HEK293T (cell line): ENCODE measurements at regions of chr1 and their contacts with region 1.

Region 1: GRCh38 chr1:3453203-3453761 is 1.2 kb upstream of the ARHGEF16 start:
- DNase-seq: peak; percentile 89

Region 2: GRCh38 chr1:3441410-3441847 is 11.9 kb before region 1 on chr1:
- CTCF ChIA-PET with region 1: interaction called, 13 read pairs
- POLR2A ChIA-PET with region 1: interaction called, 4 read pairs
- DNase-seq: no peak

Region 3: GRCh38 chr1:3471302-3472087 is 18.2 kb after region 1 on chr1:
- CTCF ChIA-PET with region 1: interaction called, 19 read pairs
- POLR2A ChIA-PET with region 1: interaction called, 3 read pairs
- DNase-seq: no peak

Region 4: DNA sequence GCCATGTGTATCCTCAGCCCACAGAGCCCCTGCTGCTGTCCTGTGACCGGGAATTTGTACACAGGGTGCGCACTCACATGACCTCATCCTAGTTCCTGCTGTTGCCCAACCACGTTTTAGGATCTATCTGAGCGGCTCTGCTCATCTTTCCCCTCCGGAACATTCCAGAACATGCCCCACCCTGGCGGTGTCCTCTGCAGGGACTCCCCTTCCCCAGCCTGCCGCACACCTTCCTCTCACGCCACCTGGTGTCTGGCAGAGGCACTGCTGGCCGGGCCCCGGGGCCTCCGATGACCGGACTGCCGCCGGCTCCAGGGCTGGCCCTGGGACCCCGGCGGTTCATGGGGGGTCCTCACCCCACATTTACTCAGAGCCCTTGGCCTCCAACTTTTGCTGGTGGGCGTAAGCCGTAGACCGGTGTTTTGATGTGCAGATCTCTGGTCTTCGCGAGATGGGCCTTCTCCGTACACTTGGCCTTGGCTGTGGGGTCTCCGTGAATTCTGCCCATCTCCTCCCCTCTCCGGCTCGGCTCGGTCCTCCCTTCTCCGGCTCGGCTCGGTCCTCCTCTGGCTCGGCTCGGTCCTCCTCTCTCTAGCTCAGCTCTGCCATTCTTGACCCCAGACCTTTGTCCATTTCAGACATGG is 30.6 kb after region 1 on chr1:
- CTCF ChIA-PET with region 1: interaction called, 26 read pairs
- POLR2A ChIA-PET with region 1: interaction called, 3 read pairs
- DNase-seq: peak; percentile 76

Region 5: DNA sequence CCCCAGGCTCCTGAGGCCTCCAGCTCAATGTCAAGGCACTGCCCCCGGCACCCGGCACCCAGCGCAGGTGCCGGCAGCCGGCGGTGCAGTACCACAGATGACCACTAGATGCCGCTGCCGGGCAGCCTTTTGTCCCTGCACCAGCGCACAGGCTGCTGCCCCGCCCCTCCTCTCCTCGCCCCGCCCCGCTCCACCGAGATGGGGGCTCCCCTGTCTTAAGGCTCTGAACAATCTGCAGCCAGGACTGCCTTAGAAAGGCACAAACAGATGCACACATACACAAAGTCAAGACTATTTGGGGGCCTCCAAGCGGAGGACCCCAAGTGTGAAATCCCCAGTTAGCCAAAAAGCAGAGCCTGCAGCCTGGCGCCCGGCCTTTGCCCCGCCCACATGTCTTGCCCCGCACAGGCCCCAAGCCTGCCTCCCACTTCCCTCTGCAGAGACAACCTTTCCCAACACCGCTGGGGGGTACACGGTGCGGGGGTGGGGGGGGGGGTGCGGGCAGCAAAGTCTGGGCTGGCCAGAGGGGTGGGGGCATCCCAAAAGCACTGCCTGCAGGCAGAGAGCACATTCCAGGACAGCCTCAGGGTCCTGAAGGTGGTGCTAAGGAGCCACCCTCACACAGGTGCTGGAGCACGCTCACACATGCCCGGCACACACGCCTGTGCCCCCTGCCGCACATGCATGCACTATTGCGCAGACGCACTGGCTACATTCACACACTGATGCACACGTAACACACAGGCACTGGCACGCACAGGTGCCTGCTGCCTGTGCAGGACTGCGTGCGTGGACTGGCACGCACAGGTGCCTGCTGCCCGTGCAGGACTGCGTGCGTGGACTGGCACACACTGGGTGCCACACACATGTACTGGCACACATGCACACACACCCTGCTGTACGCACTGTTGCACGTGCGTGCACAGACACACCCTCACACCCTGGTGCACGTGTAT is 38.3 kb after region 1 on chr1:
- CTCF ChIA-PET with region 1: interaction called, 24 read pairs
- POLR2A ChIA-PET with region 1: no interaction called
- DNase-seq: peak; percentile 91